PC-9 (cell line): ENCODE measurements at regions of chr1 and their contacts with region 1.

Region 1: GRCh38 chr1:167220537-167221125 is at the start of gene POU2F1:
- DNase-seq: peak; percentile 92 to 98
- H3K4me3 ChIP-seq: peak within 1 kb of the TSS; percentile 70
- H3K27ac ChIP-seq: peak within 1 kb of the TSS; percentile 92
- H3K4me1 ChIP-seq: peaks cover 34% of the 10 kb centered on the region
- H3K27me3 ChIP-seq: no peaks in the 10 kb centered on the region
- CTCF ChIP-seq: peak; percentile 76
- total RNA-seq, gene POU2F1: 16.6 and 28.5 TPM in 2 replicates

Region 2: DNA sequence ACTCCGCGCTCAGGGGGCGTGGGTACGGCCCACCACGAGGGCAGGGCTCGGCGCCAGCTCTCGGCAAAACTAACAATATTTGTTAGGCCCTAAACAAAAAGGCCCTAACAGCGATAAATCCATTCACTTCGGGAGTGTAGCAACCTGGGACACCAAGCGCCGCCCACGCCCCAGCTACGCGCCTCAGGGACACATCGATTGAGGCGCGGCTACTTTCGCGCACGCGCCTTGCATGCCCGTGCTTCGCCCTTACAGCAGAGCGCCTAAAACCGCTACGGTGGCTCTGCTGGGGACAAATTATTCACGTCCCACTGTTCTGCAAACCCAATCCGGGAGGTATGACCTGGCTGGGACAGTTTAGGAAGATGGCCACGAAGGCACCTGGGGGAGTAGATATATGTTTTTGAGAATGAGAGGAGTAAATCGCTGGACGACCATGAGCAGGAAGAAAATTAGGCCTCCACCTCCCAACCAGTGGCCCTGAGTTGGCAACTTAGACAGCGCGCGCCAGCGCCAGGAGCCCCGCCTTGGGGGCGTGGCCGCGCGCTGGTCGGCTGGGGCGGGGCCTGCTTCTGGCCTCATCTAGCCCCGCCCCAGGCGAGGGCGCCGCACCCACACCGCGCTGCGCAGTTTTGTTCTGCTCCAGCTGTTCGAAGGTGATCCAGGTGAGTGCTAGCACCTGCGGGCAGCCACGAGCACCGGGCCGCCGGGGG is 1589.8 kb before region 1 on chr1 and contains the start of gene MGST3:
- CTCF ChIA-PET with region 1: no interaction called
- POLR2A ChIA-PET with region 1: no interaction called
- intact Hi-C with region 1: loop called (anchors 5 kb)
- DNase-seq: peak; percentile 83 to 90
- H3K4me3 ChIP-seq: peak within 1 kb of the TSS; percentile 75
- H3K27ac ChIP-seq: peak within 1 kb of the TSS; percentile 80
- H3K4me1 ChIP-seq: peaks cover 30% of the 10 kb centered on the region
- H3K27me3 ChIP-seq: no peaks in the 10 kb centered on the region
- CTCF ChIP-seq: no peak
- total RNA-seq, gene MGST3: 67.2 and 90.1 TPM in 2 replicates

Region 3: GRCh38 chr1:166910396-166910994 is 310.1 kb before region 1 on chr1:
- CTCF ChIA-PET with region 1: no interaction called
- POLR2A ChIA-PET with region 1: interaction called, 4 read pairs
- intact Hi-C with region 1: loop called (anchors 1 kb)
- DNase-seq: peak; percentile 69 to 90
- H3K4me3 ChIP-seq: no peak overlapping the region
- H3K27ac ChIP-seq: no peak overlapping the region
- H3K4me1 ChIP-seq: peaks cover 20% of the 10 kb centered on the region
- H3K27me3 ChIP-seq: no peaks in the 10 kb centered on the region
- CTCF ChIP-seq: peak; percentile 88

Region 4: DNA sequence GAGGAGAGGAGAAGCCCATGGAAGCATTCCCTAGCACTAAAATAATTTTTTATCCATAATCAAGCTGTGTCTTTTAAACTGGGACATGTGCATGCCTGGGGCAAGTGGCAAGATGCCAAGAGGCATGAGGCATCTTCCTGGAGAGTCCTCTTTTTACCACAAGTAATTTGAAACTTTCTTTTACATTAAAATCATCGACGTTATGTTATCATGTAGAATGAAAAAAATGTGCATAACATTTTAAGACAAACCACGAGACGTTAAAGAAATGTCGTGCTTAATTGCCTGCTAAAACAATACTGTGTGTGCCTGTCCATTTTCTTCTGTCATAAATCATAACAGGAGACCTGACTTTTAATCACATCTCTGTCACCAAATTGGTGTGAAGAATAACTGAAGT is 125.3 kb before region 1 on chr1:
- CTCF ChIA-PET with region 1: interaction called, 13 read pairs
- POLR2A ChIA-PET with region 1: no interaction called
- intact Hi-C with region 1: no loop called
- DNase-seq: peak; percentile 80 to 82
- H3K4me3 ChIP-seq: no peak overlapping the region
- H3K27ac ChIP-seq: no peak overlapping the region
- H3K4me1 ChIP-seq: peaks cover 24% of the 10 kb centered on the region
- H3K27me3 ChIP-seq: no peaks in the 10 kb centered on the region
- CTCF ChIP-seq: no peak

Region 5: GRCh38 chr1:167136191-167136614 is 84.4 kb before region 1 on chr1:
- CTCF ChIA-PET with region 1: interaction called, 10 read pairs
- POLR2A ChIA-PET with region 1: interaction called, 23 read pairs
- intact Hi-C with region 1: no loop called
- DNase-seq: peak; percentile 31 to 69
- H3K4me3 ChIP-seq: no peak overlapping the region
- H3K27ac ChIP-seq: no peak overlapping the region
- H3K4me1 ChIP-seq: peaks cover 12% of the 10 kb centered on the region
- H3K27me3 ChIP-seq: no peaks in the 10 kb centered on the region
- CTCF ChIP-seq: no peak

Region 6: DNA sequence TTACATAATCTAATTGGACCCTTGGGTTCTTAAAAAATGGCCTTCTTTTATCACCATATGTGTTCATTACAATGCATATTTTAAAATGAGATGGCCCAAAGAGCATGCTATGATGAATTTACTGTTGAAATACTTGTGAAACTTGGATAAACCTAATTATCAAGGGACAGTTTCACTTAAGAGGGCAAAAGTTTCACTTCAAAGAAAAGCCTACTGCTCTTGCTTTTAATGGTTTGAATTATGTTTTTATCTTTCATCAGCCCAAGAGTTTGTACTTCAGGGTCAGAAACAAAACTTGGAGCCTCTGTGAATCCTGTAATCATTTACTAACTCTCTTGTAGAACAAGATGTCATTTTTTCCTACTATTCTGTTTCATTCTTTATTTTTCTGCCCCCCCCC is 32.4 kb after region 1 on chr1:
- CTCF ChIA-PET with region 1: no interaction called
- POLR2A ChIA-PET with region 1: no interaction called
- intact Hi-C with region 1: no loop called
- DNase-seq: no peak
- H3K4me3 ChIP-seq: no peak overlapping the region
- H3K27ac ChIP-seq: no peak overlapping the region
- H3K4me1 ChIP-seq: peaks cover 16% of the 10 kb centered on the region
- H3K27me3 ChIP-seq: no peaks in the 10 kb centered on the region
- CTCF ChIP-seq: no peak

Region 7: GRCh38 chr1:167270349-167271092 is 49.9 kb after region 1 on chr1:
- CTCF ChIA-PET with region 1: interaction called, 11 read pairs
- POLR2A ChIA-PET with region 1: interaction called, 16 read pairs
- intact Hi-C with region 1: loop called (anchors 5 kb)
- DNase-seq: no peak
- H3K4me3 ChIP-seq: no peak overlapping the region
- H3K27ac ChIP-seq: no peak overlapping the region
- H3K4me1 ChIP-seq: no peaks in the 10 kb centered on the region
- H3K27me3 ChIP-seq: no peaks in the 10 kb centered on the region
- CTCF ChIP-seq: no peak

Region 8: GRCh38 chr1:167510244-167510643 is 289.6 kb after region 1 on chr1:
- CTCF ChIA-PET with region 1: no interaction called
- POLR2A ChIA-PET with region 1: no interaction called
- intact Hi-C with region 1: no loop called
- DNase-seq: no peak
- H3K4me3 ChIP-seq: no peak overlapping the region
- H3K27ac ChIP-seq: no peak overlapping the region
- H3K4me1 ChIP-seq: no peaks in the 10 kb centered on the region
- H3K27me3 ChIP-seq: no peaks in the 10 kb centered on the region
- CTCF ChIP-seq: no peak

Region 9: GRCh38 chr1:167533851-167534300 is 313.2 kb after region 1 on chr1:
- CTCF ChIA-PET with region 1: no interaction called
- POLR2A ChIA-PET with region 1: no interaction called
- intact Hi-C with region 1: loop called (anchors 5 kb)
- DNase-seq: peak; percentile 52 to 67
- H3K4me3 ChIP-seq: no peak overlapping the region
- H3K27ac ChIP-seq: no peak overlapping the region
- H3K4me1 ChIP-seq: no peaks in the 10 kb centered on the region
- H3K27me3 ChIP-seq: no peaks in the 10 kb centered on the region
- CTCF ChIP-seq: peak; percentile 91